ENCODE measurements at regions of chr10 and their contacts with region 1.

Region 1: DNA sequence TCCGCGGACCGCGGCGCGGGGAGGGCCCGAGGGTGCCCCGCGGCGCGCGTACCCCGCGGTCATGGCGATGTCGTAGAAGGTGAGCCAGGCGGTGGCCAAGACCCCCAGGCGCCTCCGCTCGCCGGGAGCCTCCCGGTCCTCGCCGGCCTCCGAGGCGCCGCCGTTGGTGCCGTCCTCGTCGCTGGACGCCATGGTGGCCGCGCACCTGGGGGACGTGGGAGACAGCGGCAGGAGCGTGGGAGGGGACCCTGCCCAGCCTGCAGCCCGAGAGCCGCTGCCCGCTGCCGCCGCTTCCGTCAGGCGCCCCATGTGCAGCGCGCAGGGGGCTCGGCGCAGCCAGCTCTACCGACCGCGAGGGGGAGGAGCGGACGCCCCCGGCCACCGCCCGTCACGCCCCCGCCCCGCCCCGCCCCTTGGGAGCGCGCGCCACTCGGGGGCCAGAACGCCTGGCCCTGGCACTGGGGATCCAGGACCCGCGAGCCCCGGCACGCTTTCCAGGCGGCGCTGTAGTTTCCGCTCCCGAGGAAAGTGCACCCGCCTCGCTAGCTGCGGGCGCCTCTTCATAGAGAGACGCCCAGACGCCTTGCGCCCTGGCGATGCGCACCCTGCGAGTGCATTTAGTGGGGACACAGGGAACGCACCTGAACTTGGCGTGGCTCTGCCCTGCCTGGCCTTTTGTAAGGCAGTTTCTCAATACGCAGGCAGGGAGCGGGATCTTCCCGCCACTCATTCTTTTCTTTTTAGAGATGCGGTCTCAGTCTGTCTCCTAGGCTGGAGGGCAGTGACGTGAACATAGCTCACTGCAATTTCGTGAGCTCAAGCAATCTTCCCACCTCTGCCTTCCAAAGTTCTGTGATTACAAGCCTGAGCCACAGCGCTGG is at the start of gene HACD1:
- DNase-seq: peak in 2 of 3 donors; percentile 25 to 29
- H3K4me3 ChIP-seq: peak within 1 kb of the TSS; percentile 56 to 83 (median 66)
- H3K4me3 Mint-ChIP-seq: peak within 1 kb of the TSS; percentile 83 to 95
- H3K27ac ChIP-seq: no peak within 1 kb of the TSS
- H3K27ac Mint-ChIP-seq: peak within 1 kb of the TSS in 3 of 7 donors; percentile 15 to 52 (median 30)
- H3K4me1 ChIP-seq: peaks cover 13 to 15% of the 10 kb centered on the region in 2 donors
- H3K4me1 Mint-ChIP-seq: peaks cover 13% of the 10 kb centered on the region
- H3K27me3 ChIP-seq: no peaks in the 10 kb centered on the region
- H3K27me3 Mint-ChIP-seq: peaks cover 3 to 15% (median 11%) of the 10 kb centered on the region in 3 donors
- CTCF ChIP-seq: peak; percentile 23
- polyA plus RNA-seq, gene HACD1: 0.53 to 1.4 (median 0.86) TPM

Region 2: DNA sequence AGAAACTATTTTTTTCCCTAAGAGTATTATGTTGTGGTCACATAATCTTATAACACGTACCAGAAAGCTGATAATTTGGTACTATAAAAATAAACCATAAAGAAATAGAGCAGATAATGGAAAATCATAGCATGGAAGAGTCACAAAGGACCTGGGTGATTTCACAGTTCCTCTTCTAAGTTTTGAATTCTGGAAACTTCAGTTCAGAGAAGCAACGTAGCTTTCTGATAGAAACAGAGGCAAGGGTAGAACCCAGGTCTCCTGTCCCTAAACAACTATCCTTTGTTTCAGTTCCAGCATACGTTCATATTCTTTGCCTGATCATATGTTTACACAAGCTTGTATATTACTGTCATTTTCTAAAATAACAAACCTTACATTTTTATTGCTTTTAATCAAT is 239.8 kb after region 1 on chr10:
- intact Hi-C with region 1: loop called in 1 of 2 experiments (anchors 2 kb)
- DNase-seq: no peak
- H3K4me3 ChIP-seq: no peak overlapping the region
- H3K4me3 Mint-ChIP-seq: no peak overlapping the region
- H3K27ac ChIP-seq: no peak overlapping the region
- H3K27ac Mint-ChIP-seq: no peak overlapping the region
- H3K4me1 ChIP-seq: peaks cover 16 to 19% of the 10 kb centered on the region in 2 donors
- H3K4me1 Mint-ChIP-seq: peaks cover 27% of the 10 kb centered on the region
- H3K27me3 ChIP-seq: no peaks in the 10 kb centered on the region
- H3K27me3 Mint-ChIP-seq: no peaks in the 10 kb centered on the region
- CTCF ChIP-seq: no peak

Measured in CD14-positive monocyte (primary cell).